Posterior cingulate gyrus (tissue), 11 donors: ENCODE measurements at regions of chr10 and their contacts with region 1.

Region 1: DNA sequence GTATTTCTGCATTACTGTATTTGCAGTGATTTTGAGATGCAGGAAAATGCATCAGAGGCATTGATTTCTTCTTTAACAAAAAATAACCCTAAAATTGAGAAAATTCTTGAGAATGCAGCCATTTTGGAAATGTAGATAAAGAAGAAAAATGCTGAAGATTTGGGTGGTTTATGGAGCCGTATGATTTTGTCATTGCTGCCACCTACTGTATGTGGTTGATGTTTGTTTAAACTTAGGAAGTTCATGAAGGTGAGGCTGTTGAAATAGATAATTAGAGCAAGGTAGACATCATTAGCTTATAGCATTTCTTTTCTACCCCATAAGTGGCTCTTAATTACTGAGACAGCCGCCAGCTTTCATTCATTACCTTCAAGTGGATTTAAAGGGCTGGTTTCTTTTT is 92.1 kb upstream of the SAMD8 start:
- DNase-seq: no peak

Region 2: GRCh38 chr10:74262856-74263255 is 756.5 kb before region 1 on chr10:
- intact Hi-C with region 1: loop called (anchors 2 kb)
- DNase-seq: no peak